H1 (cell line): ENCODE measurements at regions of chr10 and their contacts with region 1.

Region 1: DNA sequence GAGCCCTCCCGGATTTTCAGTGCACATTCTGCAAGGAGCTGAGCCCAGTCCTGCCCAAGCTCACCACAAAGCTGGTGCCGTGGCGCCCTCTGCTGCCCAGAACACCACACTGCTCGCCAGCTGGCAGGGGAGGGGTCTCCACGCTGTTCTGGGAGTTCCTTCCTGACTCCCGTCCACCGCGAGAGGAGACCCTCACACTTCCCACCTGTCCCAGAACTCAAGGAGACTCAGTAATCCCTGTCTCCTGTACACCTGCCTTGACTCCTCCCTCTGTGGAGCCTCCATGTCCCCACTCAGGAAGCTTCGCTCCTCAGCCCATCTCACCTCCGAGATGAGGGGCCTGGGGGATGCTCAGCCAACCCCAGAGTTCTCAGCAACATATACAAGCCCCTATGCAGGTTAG is 11.3 kb downstream of the C10orf105 start:
- DNase-seq: peak; percentile 62 to 98
- H3K4me3 ChIP-seq: peak overlapping the region in 1 of 4 experiments; percentile 1; a peak in 1 of 8 replicates
- H3K27ac ChIP-seq: no peak overlapping the region
- H3K4me1 ChIP-seq: peaks cover 0 to 2% (median 0%) of the 10 kb centered on the region in 4 experiments; a peak in 2 of 7 replicates
- H3K27me3 ChIP-seq: peaks cover 0 to 3% (median 0%) of the 10 kb centered on the region in 4 experiments; a peak in 1 of 7 replicates
- CTCF ChIP-seq: peak; percentile 95 to 99 (median 98)
- EP300 ChIP-seq: no peak
- POLR2A ChIP-seq: no peak
- RAD21 ChIP-seq: peak; percentile 98 to 99

Region 2: DNA sequence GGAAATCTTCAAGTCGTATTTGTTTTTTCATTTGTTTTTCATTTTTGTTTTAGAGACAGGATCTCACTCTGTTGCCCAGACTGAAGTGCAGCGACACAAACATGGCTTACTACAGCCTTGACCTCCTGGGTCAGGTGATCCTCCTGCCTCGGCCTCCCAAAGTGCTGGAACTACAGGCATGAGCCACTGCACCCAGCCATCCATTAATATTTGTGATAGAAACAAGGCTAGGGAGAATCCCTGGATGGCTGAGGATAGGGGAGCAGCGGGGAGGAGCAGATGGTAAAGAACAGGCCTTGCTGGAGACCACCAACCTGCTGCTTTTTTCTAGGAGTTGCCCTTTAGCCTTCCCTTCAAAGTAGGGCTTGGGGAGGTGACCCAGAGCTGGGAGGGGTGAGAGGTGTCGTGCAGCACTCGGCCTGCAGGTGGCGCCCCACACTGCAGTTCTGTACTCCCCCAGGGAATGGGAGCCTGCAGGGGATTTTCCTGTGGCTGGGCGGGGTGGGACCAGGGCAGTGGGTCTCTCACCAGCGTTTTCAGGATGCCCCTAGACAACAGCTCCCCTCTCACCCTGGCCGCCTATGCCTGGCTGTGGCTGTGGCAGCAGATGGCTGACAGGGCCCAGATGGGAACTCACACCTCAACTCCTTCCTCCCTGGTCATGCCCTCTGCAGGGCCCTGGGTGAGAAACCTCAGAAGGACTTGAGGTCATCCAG is 324.2 kb before region 1 on chr10:
- CTCF ChIA-PET with region 1: interaction called, 17 read pairs
- POLR2A ChIA-PET with region 1: no interaction called
- DNase-seq: peak; percentile 58 to 99
- H3K4me3 ChIP-seq: no peak overlapping the region
- H3K27ac ChIP-seq: no peak overlapping the region
- H3K4me1 ChIP-seq: no peaks in the 10 kb centered on the region
- H3K27me3 ChIP-seq: no peaks in the 10 kb centered on the region
- CTCF ChIP-seq: peak; percentile 93 to 96 (median 95)
- EP300 ChIP-seq: no peak
- POLR2A ChIP-seq: no peak
- RAD21 ChIP-seq: peak; percentile 91 to 92

Region 3: GRCh38 chr10:71522442-71523144 is 185.7 kb before region 1 on chr10:
- CTCF ChIA-PET with region 1: interaction called, 10 read pairs
- POLR2A ChIA-PET with region 1: no interaction called
- DNase-seq: no peak
- H3K4me3 ChIP-seq: no peak overlapping the region
- H3K27ac ChIP-seq: no peak overlapping the region
- H3K4me1 ChIP-seq: peaks cover 0 to 3% (median 0%) of the 10 kb centered on the region in 4 experiments; a peak in 3 of 7 replicates
- H3K27me3 ChIP-seq: no peaks in the 10 kb centered on the region; a peak in 2 of 7 replicates
- CTCF ChIP-seq: peak; percentile 24 to 41 (median 37); a peak in 3 of 4 replicates
- EP300 ChIP-seq: no peak
- POLR2A ChIP-seq: no peak
- RAD21 ChIP-seq: peak; percentile 24 to 39; a peak in 3 of 4 replicates

Region 4: DNA sequence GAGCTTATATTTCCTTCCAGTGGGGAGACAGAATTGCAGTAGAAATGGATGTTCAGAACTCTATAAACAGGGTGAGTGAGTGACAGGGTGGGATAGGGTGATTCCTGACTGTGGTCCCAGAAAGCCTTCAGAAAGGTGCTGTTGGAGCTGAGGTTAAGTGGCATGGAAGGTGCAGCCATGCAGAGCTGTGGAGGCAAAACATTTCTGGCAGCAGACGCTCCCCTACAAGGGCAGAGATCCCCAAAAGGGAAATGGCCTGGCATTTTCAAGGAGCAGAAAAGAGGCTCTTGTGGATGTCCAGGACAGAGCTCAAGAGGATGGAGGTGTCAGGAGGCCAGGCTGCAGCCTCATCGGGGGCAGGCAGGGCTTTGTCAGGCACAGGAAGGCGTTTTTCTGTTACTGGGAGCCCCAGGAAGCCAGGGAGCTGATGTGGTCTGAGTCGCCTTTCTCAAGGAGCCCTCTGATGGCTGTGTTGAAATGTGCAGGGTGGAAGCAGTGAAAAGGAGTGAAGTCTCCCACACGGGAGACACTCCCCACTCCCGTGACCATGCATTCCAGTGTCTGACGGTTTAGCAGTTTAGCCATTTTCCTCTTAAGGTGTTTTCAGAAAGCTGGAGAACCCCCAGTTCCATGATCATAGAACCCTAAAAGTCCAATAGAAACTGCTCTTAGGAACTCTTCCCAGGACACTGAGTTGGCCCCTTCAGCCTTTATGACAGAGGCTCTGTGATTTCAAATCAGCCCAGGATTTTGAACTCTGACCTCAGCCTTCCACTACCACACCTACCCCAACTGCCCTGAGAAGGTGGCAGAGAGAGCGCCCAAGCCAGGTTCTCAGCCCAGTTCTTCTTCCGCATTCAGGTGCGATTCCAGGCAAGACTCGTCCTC is 85.0 kb before region 1 on chr10:
- CTCF ChIA-PET with region 1: interaction called, 21 read pairs
- POLR2A ChIA-PET with region 1: interaction called, 3 read pairs
- DNase-seq: no peak
- H3K4me3 ChIP-seq: peak overlapping the region in 1 of 4 experiments; percentile 33; a peak in 1 of 8 replicates
- H3K27ac ChIP-seq: no peak overlapping the region
- H3K4me1 ChIP-seq: peaks cover 25 to 52% (median 35%) of the 10 kb centered on the region in 4 experiments
- H3K27me3 ChIP-seq: no peaks in the 10 kb centered on the region
- CTCF ChIP-seq: peak in 2 of 3 experiments; percentile 6 to 46; a peak in 2 of 4 replicates
- EP300 ChIP-seq: no peak
- POLR2A ChIP-seq: no peak
- RAD21 ChIP-seq: peak; percentile 28 to 43; a peak in 3 of 4 replicates

Region 5: GRCh38 chr10:71679425-71679824 is 28.9 kb before region 1 on chr10:
- CTCF ChIA-PET with region 1: interaction called, 12 read pairs
- POLR2A ChIA-PET with region 1: no interaction called
- DNase-seq: no peak
- H3K4me3 ChIP-seq: no peak overlapping the region
- H3K27ac ChIP-seq: no peak overlapping the region
- H3K4me1 ChIP-seq: peaks cover 0 to 2% (median 0%) of the 10 kb centered on the region in 4 experiments; a peak in 1 of 7 replicates
- H3K27me3 ChIP-seq: no peaks in the 10 kb centered on the region; a peak in 1 of 7 replicates
- CTCF ChIP-seq: no peak
- EP300 ChIP-seq: no peak
- POLR2A ChIP-seq: no peak
- RAD21 ChIP-seq: no peak

Region 6: GRCh38 chr10:71727738-71728737 is 19.7 kb after region 1 on chr10:
- CTCF ChIA-PET with region 1: interaction called, 42 read pairs
- POLR2A ChIA-PET with region 1: no interaction called
- DNase-seq: no peak
- H3K4me3 ChIP-seq: no peak overlapping the region
- H3K27ac ChIP-seq: no peak overlapping the region
- H3K4me1 ChIP-seq: peaks cover 0 to 4% (median 0%) of the 10 kb centered on the region in 4 experiments; a peak in 1 of 7 replicates
- H3K27me3 ChIP-seq: no peaks in the 10 kb centered on the region
- CTCF ChIP-seq: no peak
- EP300 ChIP-seq: no peak
- POLR2A ChIP-seq: no peak
- RAD21 ChIP-seq: no peak